Heart left ventricle (tissue), 16 donors: ENCODE measurements at regions of chr6 and their contacts with region 1.

Region 1: GRCh38 chr6:132279592-132280139 is 121.6 kb downstream of the MOXD1 start:
- DNase-seq: peak; percentile 57 to 80 (median 69)
- ATAC-seq: peak; percentile 47 to 78 (median 73)
- H3K4me3 ChIP-seq: peak overlapping the region in 10 of 12 donors; percentile 25 to 59 (median 44)
- H3K27ac ChIP-seq: no peak overlapping the region
- H3K4me1 ChIP-seq: no peaks in the 10 kb centered on the region
- H3K27me3 ChIP-seq: peaks cover 0 to 10% (median 0%) of the 10 kb centered on the region in 9 donors
- CTCF ChIP-seq: peak; percentile 78 to 98 (median 90)
- POLR2A ChIP-seq: no peak

Region 2: DNA sequence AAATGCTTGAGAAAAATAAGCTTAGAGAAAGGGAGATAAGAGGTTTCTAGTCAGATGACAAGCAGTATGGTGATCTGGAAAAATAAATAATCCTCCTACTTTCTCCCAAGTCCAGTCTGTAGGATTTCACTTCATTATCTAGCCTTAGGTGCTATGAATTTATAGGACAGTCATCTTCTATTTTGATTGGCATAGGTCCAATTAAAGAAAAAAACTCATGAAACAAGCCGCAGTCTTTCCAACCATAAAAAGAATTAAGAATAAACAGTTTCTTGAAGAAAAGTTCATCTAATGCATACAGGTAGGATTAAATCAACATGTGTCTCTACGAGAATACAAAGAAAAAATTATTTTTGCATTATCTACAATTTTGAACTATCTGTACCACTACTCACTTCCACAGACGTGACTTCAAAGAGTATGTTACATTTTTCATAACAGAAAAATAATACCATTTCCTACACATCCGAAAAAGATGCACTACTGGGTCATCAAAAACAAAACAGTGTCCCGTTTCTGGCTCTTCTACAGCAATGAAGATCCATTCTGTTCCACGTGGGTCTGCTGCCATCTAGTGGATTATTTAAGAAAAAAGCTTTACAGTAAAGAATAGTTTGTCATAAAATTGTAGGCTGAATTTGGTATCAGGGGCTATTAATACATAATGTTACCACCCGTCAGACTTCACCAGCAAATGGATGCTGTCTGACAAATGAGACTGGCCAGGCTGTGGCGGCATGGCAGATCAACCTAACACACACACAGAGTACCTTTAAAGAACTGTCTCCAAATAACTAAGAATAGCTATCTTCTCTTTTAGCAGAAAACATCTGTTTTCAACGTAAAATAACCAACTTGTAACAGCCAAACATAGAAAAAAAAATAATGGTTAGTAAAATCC is 204.4 kb after region 1 on chr6:
- intact Hi-C with region 1: loop called (anchors 1 to 5 kb)
- DNase-seq: peak in 2 of 5 donors; percentile 29 to 42
- ATAC-seq: peak in 3 of 4 donors; percentile 65 to 79 (median 72)
- H3K4me3 ChIP-seq: no peak overlapping the region
- H3K27ac ChIP-seq: no peak overlapping the region
- H3K4me1 ChIP-seq: peaks cover 0 to 33% (median 18%) of the 10 kb centered on the region in 12 donors
- H3K27me3 ChIP-seq: no peaks in the 10 kb centered on the region
- CTCF ChIP-seq: peak; percentile 60 to 83 (median 76)
- POLR2A ChIP-seq: no peak